Colonic mucosa (tissue), 4 donors: ENCODE measurements at regions of chr9 and their contacts with region 1.

Region 1: GRCh38 chr9:125407974-125408900 is 146.6 kb downstream of the GAPVD1 start:
- DNase-seq: peak; percentile 79
- H3K4me3 ChIP-seq: peak overlapping the region; percentile 68
- H3K27ac ChIP-seq: no peak overlapping the region
- H3K4me1 ChIP-seq: peaks cover 5% of the 10 kb centered on the region
- H3K27me3 ChIP-seq: no peaks in the 10 kb centered on the region
- CTCF ChIP-seq: peak; percentile 59

Region 2: GRCh38 chr9:125558453-125559092 is 150.3 kb after region 1 on chr9:
- intact Hi-C with region 1: loop called (anchors 10 kb)
- DNase-seq: peak; percentile 76
- H3K4me3 ChIP-seq: no peak overlapping the region
- H3K27ac ChIP-seq: no peak overlapping the region
- H3K4me1 ChIP-seq: no peaks in the 10 kb centered on the region
- H3K27me3 ChIP-seq: no peaks in the 10 kb centered on the region
- CTCF ChIP-seq: peak; percentile 82

Region 3: GRCh38 chr9:125631391-125632085 is 223.3 kb after region 1 on chr9:
- intact Hi-C with region 1: loop called (anchors 10 kb)
- DNase-seq: peak; percentile 40
- H3K4me3 ChIP-seq: no peak overlapping the region
- H3K27ac ChIP-seq: no peak overlapping the region
- H3K4me1 ChIP-seq: peaks cover 16% of the 10 kb centered on the region
- H3K27me3 ChIP-seq: no peaks in the 10 kb centered on the region
- CTCF ChIP-seq: peak; percentile 48

Region 4: GRCh38 chr9:126228781-126229444 is 820.7 kb after region 1 on chr9:
- intact Hi-C with region 1: loop called (anchors 1 kb)
- DNase-seq: peak; percentile 71
- H3K4me3 ChIP-seq: no peak overlapping the region
- H3K27ac ChIP-seq: no peak overlapping the region
- H3K4me1 ChIP-seq: no peaks in the 10 kb centered on the region
- H3K27me3 ChIP-seq: peaks cover under 1% of the 10 kb centered on the region
- CTCF ChIP-seq: peak; percentile 97

Region 5: GRCh38 chr9:126398403-126399058 is 990.3 kb after region 1 on chr9:
- intact Hi-C with region 1: loop called (anchors 10 kb)
- DNase-seq: peak; percentile 85
- H3K4me3 ChIP-seq: no peak overlapping the region
- H3K27ac ChIP-seq: no peak overlapping the region
- H3K4me1 ChIP-seq: peaks cover 5% of the 10 kb centered on the region
- H3K27me3 ChIP-seq: no peaks in the 10 kb centered on the region
- CTCF ChIP-seq: peak; percentile 97